ENCODE measurements at regions of chr12 and their contacts with region 1.

Region 1: GRCh38 chr12:42589465-42590329 is at the start of gene PRICKLE1:
- DNase-seq: peak; percentile 78
- total RNA-seq, gene PRICKLE1: 34.3 TPM

Region 2: DNA sequence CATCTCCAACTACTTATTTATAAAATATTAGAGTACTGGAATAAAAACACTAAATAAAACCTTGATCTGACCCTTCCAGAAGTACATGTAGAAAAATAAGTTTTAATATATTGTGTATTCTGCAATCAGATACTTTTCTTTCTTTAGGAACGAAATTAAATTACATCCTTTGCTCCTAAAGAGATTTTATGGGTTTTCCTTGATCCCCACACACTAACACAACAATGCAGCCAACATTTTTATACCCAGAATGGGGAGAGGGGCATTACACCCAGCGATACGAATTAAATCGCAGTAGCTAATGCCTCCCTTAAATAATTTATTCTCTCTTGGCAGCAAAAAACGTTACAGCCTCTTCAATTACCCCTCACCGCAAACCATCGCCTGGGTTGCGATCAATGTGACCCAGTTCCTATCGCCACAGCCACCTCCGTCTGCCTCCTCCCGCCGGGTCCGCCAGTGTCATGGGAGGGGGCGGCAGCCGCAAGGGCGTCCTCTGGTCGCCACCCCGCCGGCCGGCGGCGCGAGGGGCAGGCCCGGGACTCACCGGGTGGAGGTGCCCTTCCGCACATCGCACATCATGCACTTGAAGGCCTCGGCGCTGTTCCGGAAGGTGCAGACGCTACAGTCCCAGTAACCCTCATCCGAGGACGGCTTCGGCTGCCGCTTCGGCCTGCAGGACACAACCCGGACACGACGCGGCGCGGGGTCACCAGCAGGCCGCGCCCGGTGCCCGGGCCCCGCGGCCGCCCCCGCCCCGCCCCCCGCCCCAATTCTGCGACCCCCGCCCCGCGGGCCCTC is 352.4 kb before region 1 on chr12:
- intact Hi-C with region 1: loop called (anchors 5 kb)
- DNase-seq: peak; percentile 88

Region 3: DNA sequence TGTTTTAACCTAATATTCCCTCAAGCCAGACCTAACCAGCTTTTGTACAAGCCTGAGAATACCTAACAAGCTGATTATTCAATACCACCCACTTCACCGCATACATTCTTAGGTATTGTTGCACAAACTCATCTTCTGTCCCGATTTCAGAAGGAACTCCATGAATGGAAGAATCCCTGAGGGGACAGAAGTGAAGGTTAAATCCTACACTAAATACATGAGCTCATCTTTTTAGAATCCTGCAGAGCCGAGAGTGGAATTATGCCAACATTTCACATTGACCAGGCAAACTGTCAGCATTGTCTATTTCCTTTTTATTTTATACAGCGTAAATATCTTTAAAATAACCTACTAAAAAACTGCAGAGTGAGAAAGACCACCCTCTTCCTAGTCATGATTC is 140.6 kb after region 1 on chr12:
- intact Hi-C with region 1: loop called (anchors 5 kb)
- DNase-seq: no peak

Region 4: DNA sequence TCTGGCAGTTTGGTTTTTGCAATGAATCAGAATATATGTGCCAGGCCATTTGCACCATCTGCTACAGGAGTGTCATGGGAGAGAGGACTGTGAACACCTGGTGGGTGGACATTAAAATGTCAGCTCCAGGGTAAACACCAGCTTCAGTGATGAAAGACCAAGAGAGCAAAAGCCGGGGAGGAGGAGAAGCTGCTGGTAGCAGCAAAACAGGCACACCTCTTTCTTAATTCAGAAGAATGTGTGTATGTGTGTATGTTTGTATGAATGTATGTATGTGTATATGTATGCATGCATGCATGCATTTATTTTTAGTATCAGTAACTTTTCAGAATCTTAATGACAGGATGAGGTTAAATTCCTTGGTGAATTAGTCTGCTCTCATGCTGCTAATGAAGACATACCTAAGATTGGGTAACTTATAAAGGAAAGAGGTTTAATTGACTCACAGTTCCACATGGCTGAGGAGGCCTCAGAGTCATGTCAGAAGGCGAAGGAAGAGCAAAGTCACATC is 357.2 kb after region 1 on chr12:
- intact Hi-C with region 1: no loop called
- DNase-seq: no peak

Region 5: DNA sequence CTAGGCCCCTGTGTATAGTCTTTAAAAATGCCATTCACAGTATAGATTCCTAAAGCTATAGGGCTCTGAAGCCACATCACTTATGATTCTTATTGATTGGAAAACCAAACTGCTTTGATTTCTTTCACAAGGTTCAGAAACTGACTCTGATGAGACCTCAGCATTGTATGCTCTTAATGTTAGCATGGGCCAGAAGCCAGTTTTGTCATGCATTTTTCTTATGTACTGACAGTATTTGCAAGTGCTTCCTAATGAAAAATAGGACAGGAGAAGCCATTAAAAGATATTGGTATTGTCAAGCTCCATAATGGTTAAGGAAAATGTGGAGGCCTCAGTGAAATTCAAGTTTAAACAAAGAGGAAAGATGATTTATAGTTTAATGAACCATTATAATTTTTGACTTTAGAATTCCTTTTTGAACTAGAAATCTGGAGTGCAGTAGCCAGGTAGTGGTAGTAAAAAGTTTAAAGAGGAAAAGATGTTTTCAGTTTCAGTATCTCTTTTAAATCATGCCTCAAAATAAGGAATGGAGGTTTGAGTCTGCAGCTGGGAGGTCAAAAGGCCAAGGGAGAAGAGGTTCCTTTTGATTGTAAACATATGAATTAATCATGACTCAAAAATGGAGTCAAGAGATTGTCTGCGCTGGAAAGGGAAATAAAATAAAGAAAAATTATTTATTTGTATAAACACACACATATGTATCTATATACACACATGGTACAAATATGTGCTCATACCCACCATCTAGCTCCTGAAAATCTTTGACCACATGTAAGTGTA is 387.9 kb after region 1 on chr12:
- intact Hi-C with region 1: loop called (anchors 10 kb)
- DNase-seq: no peak

Region 6: GRCh38 chr12:42996869-42997431 is 407.3 kb after region 1 on chr12:
- intact Hi-C with region 1: no loop called
- DNase-seq: no peak

Region 7: GRCh38 chr12:43338848-43339526 is 749.3 kb after region 1 on chr12:
- intact Hi-C with region 1: loop called (anchors 2 kb)
- DNase-seq: no peak